Endothelial cell of umbilical vein (primary cell): ENCODE measurements at regions of chr22 and their contacts with region 1.

Region 1: GRCh38 chr22:20319745-20320658 is at the start of gene DGCR6L:
- DNase-seq: peak; percentile 91
- H3K4me3 ChIP-seq: peak within 1 kb of the TSS; percentile 70 to 95 (median 72)
- H3K27ac ChIP-seq: peak within 1 kb of the TSS; percentile 90
- H3K4me1 ChIP-seq: peaks cover 10% of the 10 kb centered on the region
- H3K27me3 ChIP-seq: no peaks in the 10 kb centered on the region
- CTCF ChIP-seq: no peak
- POLR2A ChIP-seq: peak; percentile 76
- total RNA-seq, gene DGCR6L: 34.3 and 38.0 TPM in 2 replicates

Region 2: DNA sequence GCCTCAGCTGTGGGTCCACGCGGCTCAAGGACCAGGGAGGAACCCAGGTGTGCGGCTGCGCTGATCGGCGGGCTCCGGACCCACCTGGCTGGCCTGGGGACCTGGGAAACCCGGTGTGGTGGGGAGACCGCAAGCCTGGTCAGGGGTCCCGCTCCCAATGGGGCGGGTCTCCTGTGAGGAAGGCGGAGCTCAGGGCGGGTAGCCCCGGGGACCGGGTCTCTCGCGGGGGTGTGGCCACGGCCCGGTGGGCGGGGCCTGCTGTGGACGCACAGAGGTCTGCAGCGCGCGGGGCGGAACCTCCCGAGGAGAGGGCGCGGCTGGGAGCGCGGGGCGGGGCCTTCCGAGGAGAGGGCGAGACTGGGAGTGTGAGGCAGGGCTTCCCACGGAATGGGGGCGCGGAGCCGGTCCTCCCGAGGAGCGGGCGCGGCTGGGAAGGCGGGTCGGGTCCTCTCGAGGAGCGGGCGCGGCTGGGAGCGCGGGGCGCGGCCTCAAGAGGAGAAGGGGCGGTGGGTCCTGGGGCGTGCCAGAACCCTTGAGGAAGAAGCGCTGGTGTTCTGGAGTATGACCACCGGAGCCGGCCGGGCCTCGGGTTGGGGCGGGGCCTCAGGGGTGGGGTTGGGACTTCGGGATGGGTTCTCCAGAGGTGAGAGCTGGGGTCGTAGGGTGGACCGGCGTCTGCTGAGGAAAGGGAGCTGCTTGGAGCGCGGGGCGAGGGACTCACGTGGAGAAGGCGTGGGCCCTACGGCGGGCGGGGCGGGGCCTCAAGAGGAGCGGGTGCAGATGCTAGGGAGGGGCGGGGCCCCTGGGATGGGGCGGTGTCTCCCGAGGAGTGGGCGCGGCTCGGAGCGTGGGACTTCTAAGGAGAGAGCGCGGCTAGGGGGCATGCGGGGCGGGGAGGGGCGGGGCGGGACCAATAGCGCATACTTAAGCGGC is 20.9 kb before region 1 on chr22:
- CTCF ChIA-PET with region 1: interaction called, 4 read pairs
- POLR2A ChIA-PET with region 1: no interaction called
- dilution Hi-C with region 1: no loop called
- intact Hi-C with region 1: loop called (anchors 1 kb)
- DNase-seq: peak; percentile 68
- H3K4me3 ChIP-seq: peak overlapping the region; percentile 31 to 62 (median 59)
- H3K27ac ChIP-seq: no peak overlapping the region
- H3K4me1 ChIP-seq: peaks cover 8% of the 10 kb centered on the region
- H3K27me3 ChIP-seq: peaks cover 0 to 4% of the 10 kb centered on the region in 2 experiments
- CTCF ChIP-seq: no peak
- POLR2A ChIP-seq: no peak

Region 3: DNA sequence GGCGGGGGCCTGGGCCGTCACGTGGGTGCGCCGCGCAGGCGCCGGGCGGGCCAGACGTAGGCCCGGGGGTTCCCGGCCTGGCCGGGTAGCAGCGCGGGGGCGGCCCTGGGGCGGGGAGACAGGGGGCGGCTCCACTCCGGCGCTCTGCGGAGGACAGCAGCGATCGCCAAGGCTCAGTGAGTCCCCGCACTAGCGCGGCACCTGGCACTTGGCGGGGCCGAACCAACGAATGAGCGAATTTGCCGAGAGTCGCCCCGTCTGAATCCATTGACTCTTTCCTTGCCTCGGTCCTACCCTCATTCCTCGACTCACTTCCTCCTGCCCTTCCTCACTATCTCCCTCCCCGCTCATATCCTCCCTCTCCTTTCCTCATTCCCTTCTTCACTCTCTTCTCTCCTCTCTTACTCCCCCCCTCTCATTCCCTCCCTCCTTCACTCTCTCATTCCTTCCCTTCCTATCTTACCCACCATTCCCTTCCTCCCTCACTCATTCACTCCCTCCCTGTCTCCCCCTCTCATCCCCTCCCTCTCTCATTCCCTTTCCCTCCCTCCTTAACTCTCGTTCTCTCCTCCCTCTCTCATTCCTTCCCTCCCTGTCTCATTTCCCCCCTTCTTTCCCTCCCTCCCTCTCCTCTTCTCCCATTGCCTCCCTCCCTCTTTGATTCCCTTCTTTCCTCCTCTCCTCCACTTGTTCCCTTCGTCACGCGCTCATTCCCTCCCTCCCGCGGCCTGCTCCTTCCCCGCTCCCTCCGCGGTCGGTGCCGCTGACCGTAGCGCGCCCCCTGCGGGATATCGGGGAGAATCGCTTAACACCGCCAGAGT is 176.1 kb after region 1 on chr22:
- CTCF ChIA-PET with region 1: no interaction called
- POLR2A ChIA-PET with region 1: no interaction called
- dilution Hi-C with region 1: no loop called
- intact Hi-C with region 1: loop called (anchors 10 kb)
- DNase-seq: peak; percentile 91
- H3K4me3 ChIP-seq: peak overlapping the region; percentile 62 to 77 (median 74)
- H3K27ac ChIP-seq: peak overlapping the region; percentile 85
- H3K4me1 ChIP-seq: peaks cover 12% of the 10 kb centered on the region
- H3K27me3 ChIP-seq: no peaks in the 10 kb centered on the region
- CTCF ChIP-seq: peak; percentile 87 to 91
- POLR2A ChIP-seq: peak; percentile 93